B cell (primary cell): ENCODE measurements at regions of chr7 and their contacts with region 1.

Region 1: DNA sequence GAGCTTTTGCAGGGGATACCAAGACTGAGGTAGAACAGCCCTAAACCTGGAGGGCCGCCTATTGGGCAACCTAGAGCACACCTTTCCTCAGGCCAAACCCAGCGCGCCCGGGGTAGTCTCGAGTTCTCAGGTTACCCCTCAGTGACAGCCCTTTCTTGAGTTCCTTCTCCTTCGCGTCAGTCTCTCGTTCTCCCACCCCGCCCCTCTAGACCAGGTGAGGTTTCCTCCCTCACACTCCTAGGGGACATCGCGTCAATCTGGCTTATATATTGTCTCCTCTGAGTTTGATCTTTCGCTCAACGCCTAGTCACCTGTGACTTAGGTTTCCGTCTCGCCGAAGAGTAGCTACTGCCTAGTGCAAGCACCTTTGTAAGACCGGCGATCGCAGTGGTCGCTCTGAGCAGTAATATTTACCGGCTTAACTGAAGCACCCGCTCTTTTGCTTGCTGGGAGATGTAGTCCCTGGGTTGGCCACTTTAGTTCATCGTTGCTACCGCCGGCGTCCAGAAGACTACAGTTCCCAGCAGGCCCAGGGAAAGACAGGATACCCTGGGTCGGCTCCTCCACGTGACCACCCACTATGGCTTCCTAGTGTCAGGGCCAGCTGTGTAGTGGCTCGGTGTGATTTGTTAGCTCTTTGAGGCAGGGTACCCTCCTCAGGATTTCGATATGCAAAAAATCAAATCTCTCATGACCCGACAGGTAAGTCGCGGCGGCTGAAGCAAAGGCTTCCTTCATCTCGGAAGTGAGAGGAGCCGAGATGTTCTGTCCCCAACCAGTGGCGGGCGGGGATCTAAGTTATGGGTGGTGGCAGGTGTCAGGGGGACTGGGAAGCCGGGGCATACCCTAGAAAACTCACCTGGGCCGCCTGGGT is at the start of gene VPS50:
- DNase-seq: peak; percentile 97
- ATAC-seq: peak; percentile 98
- H3K4me3 ChIP-seq: peak within 1 kb of the TSS; percentile 75 to 98 (median 90)
- H3K4me3 Mint-ChIP-seq: peak within 1 kb of the TSS; percentile 95
- H3K27ac ChIP-seq: peak within 1 kb of the TSS; percentile 81 to 90
- H3K27ac Mint-ChIP-seq: peak within 1 kb of the TSS; percentile 94
- H3K4me1 ChIP-seq: peaks cover 14 to 15% of the 10 kb centered on the region in 2 donors
- H3K4me1 Mint-ChIP-seq: peaks cover 25% of the 10 kb centered on the region
- H3K27me3 ChIP-seq: no peaks in the 10 kb centered on the region
- H3K27me3 Mint-ChIP-seq: no peaks in the 10 kb centered on the region
- CTCF ChIP-seq: no peak
- total RNA-seq, gene VPS50: 54.1 and 55.4 TPM in 2 replicates

Region 2: GRCh38 chr7:92245487-92246362 is 986.3 kb before region 1 on chr7 and contains the starts of genes ANKIB1 and KRIT1:
- CTCF ChIA-PET with region 1: no interaction called
- POLR2A ChIA-PET with region 1: no interaction called
- intact Hi-C with region 1: loop called (anchors 5 kb)
- DNase-seq: peak; percentile 92
- ATAC-seq: peak; percentile 78
- H3K4me3 ChIP-seq: peak within 1 kb of the TSS; percentile 55 to 83 (median 81)
- H3K4me3 Mint-ChIP-seq: peak within 1 kb of the TSS; percentile 99
- H3K27ac ChIP-seq: peak within 1 kb of the TSS; percentile 84 to 97
- H3K27ac Mint-ChIP-seq: peak within 1 kb of the TSS; percentile 99
- H3K4me1 ChIP-seq: peaks cover 15 to 31% of the 10 kb centered on the region in 2 donors
- H3K4me1 Mint-ChIP-seq: peaks cover 39% of the 10 kb centered on the region
- H3K27me3 ChIP-seq: no peaks in the 10 kb centered on the region
- H3K27me3 Mint-ChIP-seq: no peaks in the 10 kb centered on the region
- CTCF ChIP-seq: peak; percentile 20
- total RNA-seq, gene ANKIB1: 76.7 and 77.5 TPM in 2 replicates
- total RNA-seq, gene KRIT1: 78.1 and 85.1 TPM in 2 replicates

Region 3: DNA sequence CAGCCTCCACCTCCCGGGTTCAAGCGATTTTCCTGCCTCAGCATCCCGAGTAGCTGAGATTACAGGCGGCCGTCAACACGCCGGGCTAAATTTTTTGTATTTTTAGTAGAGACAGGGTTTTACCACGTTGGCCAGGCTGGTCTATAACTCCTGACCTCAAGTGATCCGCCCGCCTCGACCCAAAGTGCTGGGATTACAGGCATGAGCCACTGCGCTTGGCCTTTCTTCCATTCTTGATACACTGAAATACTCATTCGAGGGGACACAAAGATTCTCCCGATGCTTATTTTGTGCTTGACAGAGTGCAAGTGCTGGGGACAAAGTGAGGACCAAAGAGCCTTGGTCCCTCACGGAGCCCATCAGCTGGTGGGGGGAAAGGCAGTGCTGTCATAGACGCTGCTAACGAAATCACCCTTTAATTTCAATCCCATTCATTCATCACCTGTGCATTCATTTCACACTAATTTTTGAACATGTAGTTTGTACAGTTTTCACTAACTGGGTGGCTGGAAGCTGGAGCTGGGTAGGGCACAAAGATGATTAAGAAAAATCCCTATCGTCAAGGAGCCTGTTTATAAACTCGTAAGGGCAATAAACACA is 641.2 kb before region 1 on chr7:
- CTCF ChIA-PET with region 1: interaction called, 3 read pairs
- POLR2A ChIA-PET with region 1: no interaction called
- intact Hi-C with region 1: loop called (anchors 1 kb)
- DNase-seq: no peak
- ATAC-seq: no peak
- H3K4me3 ChIP-seq: peak overlapping the region in 4 of 5 experiments; percentile 84 to 88 (median 86)
- H3K4me3 Mint-ChIP-seq: peak overlapping the region; percentile 94
- H3K27ac ChIP-seq: no peak overlapping the region
- H3K27ac Mint-ChIP-seq: peak overlapping the region; percentile 11
- H3K4me1 ChIP-seq: peaks cover 22 to 25% of the 10 kb centered on the region in 2 donors
- H3K4me1 Mint-ChIP-seq: peaks cover 41% of the 10 kb centered on the region
- H3K27me3 ChIP-seq: no peaks in the 10 kb centered on the region
- H3K27me3 Mint-ChIP-seq: no peaks in the 10 kb centered on the region
- CTCF ChIP-seq: no peak

Region 4: DNA sequence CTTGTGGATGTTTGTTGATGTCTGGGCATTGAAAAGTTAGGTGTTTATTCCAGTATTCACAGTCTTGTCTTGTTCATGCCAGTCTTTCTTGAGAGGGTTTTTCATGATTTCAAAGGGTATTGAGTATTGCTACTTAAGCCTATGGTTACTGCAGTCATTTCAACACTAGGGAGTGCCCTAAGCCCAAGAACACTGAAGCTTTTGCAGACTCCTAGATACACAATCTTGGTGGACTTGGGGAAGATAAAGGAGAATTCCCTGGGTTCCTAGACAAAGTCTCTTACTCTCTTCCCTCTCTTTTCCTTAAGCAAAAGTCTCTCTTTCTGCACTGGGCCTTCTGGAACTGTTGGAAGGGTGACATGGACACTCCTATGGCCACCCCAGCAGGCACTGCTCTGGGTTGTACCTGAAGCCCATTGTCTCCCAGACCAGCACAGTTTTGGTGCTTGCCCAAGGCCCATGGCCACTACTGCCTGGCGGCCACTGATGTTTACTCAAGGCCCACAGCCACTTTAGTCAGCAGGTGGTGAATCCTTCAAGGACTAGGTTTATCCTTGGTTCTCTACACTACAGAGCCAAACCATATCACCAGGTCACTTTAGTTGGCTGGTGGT is 139.2 kb before region 1 on chr7:
- CTCF ChIA-PET with region 1: interaction called, 5 read pairs
- POLR2A ChIA-PET with region 1: no interaction called
- intact Hi-C with region 1: loop called (anchors 1 kb)
- DNase-seq: peak; percentile 20
- ATAC-seq: no peak
- H3K4me3 ChIP-seq: no peak overlapping the region
- H3K4me3 Mint-ChIP-seq: no peak overlapping the region
- H3K27ac ChIP-seq: no peak overlapping the region
- H3K27ac Mint-ChIP-seq: no peak overlapping the region
- H3K4me1 ChIP-seq: no peaks in the 10 kb centered on the region
- H3K4me1 Mint-ChIP-seq: no peaks in the 10 kb centered on the region
- H3K27me3 ChIP-seq: peaks cover 0 to 6% (median 1%) of the 10 kb centered on the region in 4 experiments
- H3K27me3 Mint-ChIP-seq: peaks cover 20% of the 10 kb centered on the region
- CTCF ChIP-seq: peak; percentile 11

Region 5: GRCh38 chr7:93147363-93147762 is 84.7 kb before region 1 on chr7:
- CTCF ChIA-PET with region 1: interaction called, 7 read pairs
- POLR2A ChIA-PET with region 1: no interaction called
- intact Hi-C with region 1: loop called (anchors 2 kb)
- DNase-seq: peak; percentile 43
- ATAC-seq: peak; percentile 67
- H3K4me3 ChIP-seq: peak overlapping the region; percentile 43 to 93 (median 62)
- H3K4me3 Mint-ChIP-seq: peak overlapping the region; percentile 90
- H3K27ac ChIP-seq: peak overlapping the region in 1 of 2 donors; percentile 85
- H3K27ac Mint-ChIP-seq: peak overlapping the region; percentile 85
- H3K4me1 ChIP-seq: peaks cover 40 to 47% of the 10 kb centered on the region in 2 donors
- H3K4me1 Mint-ChIP-seq: peaks cover 48% of the 10 kb centered on the region
- H3K27me3 ChIP-seq: no peaks in the 10 kb centered on the region
- H3K27me3 Mint-ChIP-seq: no peaks in the 10 kb centered on the region
- CTCF ChIP-seq: no peak

Region 6: GRCh38 chr7:93159490-93159889 is 72.5 kb before region 1 on chr7:
- CTCF ChIA-PET with region 1: no interaction called
- POLR2A ChIA-PET with region 1: no interaction called
- intact Hi-C with region 1: no loop called
- DNase-seq: no peak
- ATAC-seq: no peak
- H3K4me3 ChIP-seq: no peak overlapping the region
- H3K4me3 Mint-ChIP-seq: no peak overlapping the region
- H3K27ac ChIP-seq: no peak overlapping the region
- H3K27ac Mint-ChIP-seq: no peak overlapping the region
- H3K4me1 ChIP-seq: no peaks in the 10 kb centered on the region
- H3K4me1 Mint-ChIP-seq: no peaks in the 10 kb centered on the region
- H3K27me3 ChIP-seq: no peaks in the 10 kb centered on the region
- H3K27me3 Mint-ChIP-seq: no peaks in the 10 kb centered on the region
- CTCF ChIP-seq: no peak

Region 7: DNA sequence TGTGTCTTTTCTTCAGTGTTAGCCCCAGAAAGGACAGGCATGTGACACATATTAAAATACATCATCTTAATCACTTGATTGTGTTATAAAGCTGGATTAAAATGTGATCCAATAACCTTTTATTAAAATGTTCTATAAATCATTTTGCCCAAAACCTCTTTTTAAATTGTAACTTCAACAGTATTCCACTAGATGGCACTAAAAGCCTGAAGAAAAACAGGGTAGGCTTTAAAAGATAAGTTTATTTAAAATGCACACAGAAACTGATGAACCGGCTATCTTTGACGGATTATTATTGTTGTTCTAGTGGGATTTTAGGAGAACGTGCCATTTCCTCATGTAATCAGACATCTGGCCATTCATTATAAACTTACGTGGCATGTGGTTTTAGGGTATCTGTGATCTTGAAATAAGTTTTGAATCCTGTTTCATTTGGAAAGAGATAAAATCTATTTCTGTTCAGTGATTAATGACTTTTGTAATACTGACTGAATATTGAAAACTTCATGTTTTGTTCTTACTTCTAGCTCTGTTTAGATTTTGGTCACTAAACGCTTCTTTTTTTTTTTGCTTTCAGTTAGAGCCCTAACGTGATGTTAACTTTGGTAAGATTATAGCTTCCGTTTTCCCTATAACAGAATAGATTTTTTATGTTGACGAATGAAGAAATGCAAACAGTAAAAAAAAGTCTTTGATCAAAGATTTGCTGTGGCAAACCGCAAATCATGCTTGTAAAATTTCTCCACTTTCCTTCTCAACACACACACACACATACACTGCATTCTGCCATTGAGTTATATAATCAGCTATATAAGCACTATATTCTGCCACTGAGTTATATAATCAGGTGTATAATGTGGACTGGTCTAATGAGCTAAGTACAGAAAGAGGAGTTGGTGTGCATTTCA is 13.7 kb after region 1 on chr7:
- CTCF ChIA-PET with region 1: interaction called, 23 read pairs
- POLR2A ChIA-PET with region 1: no interaction called
- intact Hi-C with region 1: no loop called
- DNase-seq: peak; percentile 54
- ATAC-seq: peak; percentile 28
- H3K4me3 ChIP-seq: no peak overlapping the region
- H3K4me3 Mint-ChIP-seq: no peak overlapping the region
- H3K27ac ChIP-seq: no peak overlapping the region
- H3K27ac Mint-ChIP-seq: no peak overlapping the region
- H3K4me1 ChIP-seq: no peaks in the 10 kb centered on the region
- H3K4me1 Mint-ChIP-seq: peaks cover 6% of the 10 kb centered on the region
- H3K27me3 ChIP-seq: no peaks in the 10 kb centered on the region
- H3K27me3 Mint-ChIP-seq: no peaks in the 10 kb centered on the region
- CTCF ChIP-seq: peak; percentile 86

Region 8: DNA sequence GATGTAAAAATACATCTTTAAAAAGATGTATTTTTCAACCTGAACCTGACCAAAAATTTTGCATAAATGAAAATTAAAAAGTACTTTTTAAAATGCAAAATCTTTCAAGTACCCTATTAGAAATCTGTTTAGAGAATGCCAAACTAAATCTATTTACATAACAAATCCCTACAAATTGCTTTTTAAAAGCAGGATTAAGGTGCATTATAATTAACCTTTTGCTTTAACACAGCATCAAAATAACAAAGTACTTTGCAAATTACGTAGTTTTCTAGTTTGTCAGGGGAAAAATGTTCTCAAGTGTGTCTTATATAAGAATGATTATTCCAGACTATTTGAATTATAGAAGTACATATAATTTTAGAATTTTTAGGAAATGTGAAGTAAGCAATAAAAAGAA is 160.9 kb after region 1 on chr7:
- CTCF ChIA-PET with region 1: no interaction called
- POLR2A ChIA-PET with region 1: no interaction called
- intact Hi-C with region 1: no loop called
- DNase-seq: no peak
- ATAC-seq: no peak
- H3K4me3 ChIP-seq: no peak overlapping the region
- H3K4me3 Mint-ChIP-seq: no peak overlapping the region
- H3K27ac ChIP-seq: no peak overlapping the region
- H3K27ac Mint-ChIP-seq: no peak overlapping the region
- H3K4me1 ChIP-seq: no peaks in the 10 kb centered on the region
- H3K4me1 Mint-ChIP-seq: no peaks in the 10 kb centered on the region
- H3K27me3 ChIP-seq: no peaks in the 10 kb centered on the region
- H3K27me3 Mint-ChIP-seq: peaks cover 9% of the 10 kb centered on the region
- CTCF ChIP-seq: no peak

Region 9: GRCh38 chr7:94657771-94658693 is 1426.0 kb after region 1 on chr7:
- CTCF ChIA-PET with region 1: no interaction called
- POLR2A ChIA-PET with region 1: no interaction called
- intact Hi-C with region 1: loop called (anchors 5 kb)
- DNase-seq: peak; percentile 97
- ATAC-seq: peak; percentile 78
- H3K4me3 ChIP-seq: peak overlapping the region in 4 of 5 experiments; percentile 45 to 71 (median 64)
- H3K4me3 Mint-ChIP-seq: peak overlapping the region; percentile 94
- H3K27ac ChIP-seq: no peak overlapping the region
- H3K27ac Mint-ChIP-seq: peak overlapping the region; percentile 82
- H3K4me1 ChIP-seq: peaks cover 16 to 29% of the 10 kb centered on the region in 2 donors
- H3K4me1 Mint-ChIP-seq: peaks cover 26% of the 10 kb centered on the region
- H3K27me3 ChIP-seq: peaks cover 0 to 18% (median 13%) of the 10 kb centered on the region in 4 experiments
- H3K27me3 Mint-ChIP-seq: peaks cover 14% of the 10 kb centered on the region
- CTCF ChIP-seq: no peak